Ascending aorta (tissue), 2 donors: ENCODE measurements at regions of chr17 and their contacts with region 1.

Region 1: DNA sequence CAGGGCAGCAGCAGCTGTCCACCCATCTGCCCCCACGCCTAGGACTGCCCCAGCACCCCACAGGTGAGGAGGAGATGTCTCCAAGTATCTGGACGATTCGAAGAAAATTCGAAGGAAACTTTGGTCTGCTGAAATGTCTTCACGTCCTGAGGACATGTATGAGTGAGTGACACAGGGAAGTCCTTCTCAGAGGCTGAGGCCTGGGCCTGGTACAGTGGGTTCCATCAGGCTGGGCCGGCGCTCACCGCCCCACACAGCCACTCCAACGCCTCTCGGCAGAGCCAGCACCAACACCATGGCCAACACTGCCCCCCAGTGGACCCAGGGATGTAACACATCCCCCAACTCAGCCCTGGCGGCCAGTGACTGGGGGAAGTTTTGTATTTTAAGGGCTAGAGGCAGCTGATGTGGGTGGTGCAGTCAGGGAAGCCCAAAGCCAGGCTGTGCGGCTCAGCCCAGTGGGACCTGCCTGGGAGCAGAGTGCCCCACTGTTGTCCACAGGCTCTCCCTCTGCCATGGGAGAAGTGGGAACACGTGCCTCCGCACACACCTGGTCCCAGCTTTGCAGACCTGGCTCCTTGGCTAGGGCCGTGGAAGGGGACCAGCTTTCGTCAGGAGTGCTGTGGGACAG is 55.8 kb upstream of the FASN start:
- DNase-seq: peak in 1 of 2 donors; percentile 83
- H3K4me3 ChIP-seq: no peak overlapping the region
- H3K27ac ChIP-seq: no peak overlapping the region
- H3K4me1 ChIP-seq: no peaks in the 10 kb centered on the region
- H3K27me3 ChIP-seq: no peaks in the 10 kb centered on the region
- CTCF ChIP-seq: peak; percentile 79 to 91 (median 91)

Region 2: GRCh38 chr17:81959362-81960129 is 194.3 kb before region 1 on chr17:
- intact Hi-C with region 1: loop called (anchors 5 kb)
- DNase-seq: peak in 1 of 2 donors; percentile 81
- H3K4me3 ChIP-seq: peak overlapping the region; percentile 50 to 64
- H3K27ac ChIP-seq: no peak overlapping the region
- H3K4me1 ChIP-seq: peaks cover 10 to 11% of the 10 kb centered on the region in 2 donors
- H3K27me3 ChIP-seq: peaks cover 29% of the 10 kb centered on the region
- CTCF ChIP-seq: peak; percentile 10 to 99 (median 47)

Region 3: DNA sequence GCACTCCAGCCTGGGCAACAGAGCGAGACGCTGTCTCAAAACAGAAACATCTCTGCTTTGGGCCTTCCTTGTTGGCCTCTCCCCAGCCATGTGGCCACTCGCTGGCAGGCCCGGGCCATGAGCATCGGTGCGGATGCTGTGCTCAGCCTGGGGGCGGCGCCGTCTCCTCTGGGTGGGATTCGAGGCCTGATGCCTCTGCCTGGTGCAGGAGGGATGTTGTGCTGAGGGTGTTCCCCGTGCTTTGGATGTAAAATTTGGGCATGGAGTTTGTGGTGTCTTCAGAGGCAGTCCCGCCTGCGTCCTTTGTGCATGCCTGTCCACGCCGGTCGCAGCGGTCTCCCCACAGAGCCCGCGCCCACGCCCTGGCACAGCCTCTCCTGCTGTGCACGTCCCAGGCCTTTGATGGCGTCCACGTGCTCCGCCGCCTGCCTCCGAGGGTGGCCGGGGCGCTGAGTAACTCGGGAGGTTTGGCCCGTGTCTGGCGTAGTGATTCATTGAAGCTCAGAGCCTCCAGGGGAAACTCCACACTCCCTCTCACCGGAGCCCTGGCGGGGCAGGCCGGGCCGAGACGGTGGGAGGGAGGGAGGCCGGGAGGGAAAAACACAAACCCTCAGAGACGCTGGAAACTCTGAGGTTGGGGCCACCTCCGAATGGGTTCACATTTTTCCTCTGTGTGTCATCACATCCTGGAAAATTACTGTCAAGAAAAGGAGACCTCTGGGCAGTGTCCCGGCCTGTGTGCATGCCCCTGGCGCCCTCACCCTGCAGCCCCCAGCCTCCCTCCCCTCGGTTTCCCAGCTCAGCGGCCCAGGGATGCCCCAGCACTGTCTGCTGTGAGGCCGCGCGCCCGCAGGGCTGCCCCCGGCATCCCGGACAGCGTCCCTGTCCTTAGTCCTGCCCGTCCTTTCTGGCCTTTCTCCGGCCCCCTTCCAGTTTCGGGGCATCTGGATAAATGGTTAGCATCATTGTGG is 150.2 kb before region 1 on chr17:
- intact Hi-C with region 1: no loop called
- DNase-seq: peak; percentile 75 to 97
- H3K4me3 ChIP-seq: peak overlapping the region in 1 of 2 donors; percentile 42
- H3K27ac ChIP-seq: peak overlapping the region; percentile 76 to 85
- H3K4me1 ChIP-seq: peaks cover 19 to 46% of the 10 kb centered on the region in 2 donors
- H3K27me3 ChIP-seq: no peaks in the 10 kb centered on the region
- CTCF ChIP-seq: no peak

Region 4: GRCh38 chr17:82030470-82031302 is 123.2 kb before region 1 on chr17:
- intact Hi-C with region 1: loop called (anchors 1 kb)
- DNase-seq: peak in 1 of 2 donors; percentile 82
- H3K4me3 ChIP-seq: peak overlapping the region; percentile 52 to 71
- H3K27ac ChIP-seq: no peak overlapping the region
- H3K4me1 ChIP-seq: peaks cover 10 to 18% of the 10 kb centered on the region in 2 donors
- H3K27me3 ChIP-seq: peaks cover 8% of the 10 kb centered on the region
- CTCF ChIP-seq: peak; percentile 92 to 98 (median 95)